ENCODE measurements at regions of chr19 and their contacts with region 1.

Region 1: GRCh38 chr19:924943-925525 is 801 bp upstream of the ARID3A start:
- DNase-seq: peak in 2 of 3 donors; percentile 51 to 74
- ATAC-seq: peak; percentile 44 to 62 (median 54)
- H3K4me3 ChIP-seq: peak overlapping the region; percentile 72 to 85 (median 76)
- H3K27ac ChIP-seq: peak overlapping the region; percentile 74 to 86 (median 84)
- H3K4me1 ChIP-seq: peaks cover 0 to 15% (median 2%) of the 10 kb centered on the region in 4 donors
- H3K27me3 ChIP-seq: peaks cover 0 to 14% of the 10 kb centered on the region in 2 donors
- CTCF ChIP-seq: no peak
- POLR2A ChIP-seq: no peak

Region 2: GRCh38 chr19:958967-959820 is 34.2 kb after region 1 on chr19:
- intact Hi-C with region 1: no loop called
- DNase-seq: no peak
- ATAC-seq: peak in 1 of 4 donors; percentile 60
- H3K4me3 ChIP-seq: no peak overlapping the region
- H3K27ac ChIP-seq: no peak overlapping the region
- H3K4me1 ChIP-seq: no peaks in the 10 kb centered on the region
- H3K27me3 ChIP-seq: no peaks in the 10 kb centered on the region
- CTCF ChIP-seq: no peak
- POLR2A ChIP-seq: no peak

Region 3: DNA sequence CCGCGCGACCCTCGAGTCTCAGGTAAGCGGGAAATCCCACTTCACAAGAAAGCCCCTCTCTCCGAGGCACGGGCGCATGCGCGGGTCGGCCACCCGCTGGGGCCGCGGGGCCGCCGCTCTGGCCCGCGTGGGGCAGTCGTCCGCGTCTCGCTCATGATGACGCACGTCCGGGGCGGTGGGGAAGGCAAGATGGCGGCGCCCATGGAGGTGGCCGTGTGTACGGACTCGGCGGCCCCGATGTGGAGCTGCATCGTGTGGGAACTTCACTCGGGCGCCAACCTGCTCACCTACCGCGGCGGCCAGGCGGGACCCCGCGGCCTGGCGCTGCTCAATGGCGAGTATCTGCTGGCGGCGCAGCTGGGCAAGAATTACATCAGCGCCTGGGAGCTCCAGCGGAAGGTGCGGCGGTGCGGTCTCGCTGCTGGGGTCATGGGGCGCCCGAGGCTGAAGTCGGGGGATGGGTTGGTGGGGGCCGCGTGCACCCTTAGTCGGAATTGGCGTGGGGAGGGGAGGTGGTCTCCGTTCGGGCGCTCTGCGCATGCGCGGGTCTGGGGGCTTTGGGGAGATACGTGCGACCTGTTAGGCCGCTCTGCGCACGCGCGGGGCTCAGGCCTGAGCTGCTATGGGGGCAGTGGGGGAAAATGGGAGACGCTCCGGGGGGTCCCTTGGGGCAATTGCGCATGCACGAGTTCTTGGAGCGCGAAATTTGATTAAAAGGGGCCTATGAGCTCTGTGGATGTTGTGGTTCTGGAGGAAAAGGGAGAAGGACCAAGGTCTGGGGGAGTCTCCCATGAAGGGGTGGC is 59.3 kb after region 1 on chr19 and contains the start of gene WDR18:
- intact Hi-C with region 1: loop called (anchors 5 kb)
- DNase-seq: peak; percentile 95 to 97 (median 96)
- ATAC-seq: peak; percentile 83 to 90 (median 86)
- H3K4me3 ChIP-seq: peak within 1 kb of the TSS; percentile 64 to 97 (median 95)
- H3K27ac ChIP-seq: peak within 1 kb of the TSS; percentile 67 to 86 (median 77)
- H3K4me1 ChIP-seq: peaks cover 0 to 30% (median 13%) of the 10 kb centered on the region in 4 donors
- H3K27me3 ChIP-seq: no peaks in the 10 kb centered on the region
- CTCF ChIP-seq: peak in 3 of 4 donors; percentile 22 to 37 (median 28)
- POLR2A ChIP-seq: peak; percentile 81
- total RNA-seq, gene WDR18: 19.0 to 56.2 (median 29.7) TPM

Measured in right lobe of liver (tissue), 6 donors.